H1 (cell line): ENCODE measurements at regions of chr1 and their contacts with region 1.

Region 1: DNA sequence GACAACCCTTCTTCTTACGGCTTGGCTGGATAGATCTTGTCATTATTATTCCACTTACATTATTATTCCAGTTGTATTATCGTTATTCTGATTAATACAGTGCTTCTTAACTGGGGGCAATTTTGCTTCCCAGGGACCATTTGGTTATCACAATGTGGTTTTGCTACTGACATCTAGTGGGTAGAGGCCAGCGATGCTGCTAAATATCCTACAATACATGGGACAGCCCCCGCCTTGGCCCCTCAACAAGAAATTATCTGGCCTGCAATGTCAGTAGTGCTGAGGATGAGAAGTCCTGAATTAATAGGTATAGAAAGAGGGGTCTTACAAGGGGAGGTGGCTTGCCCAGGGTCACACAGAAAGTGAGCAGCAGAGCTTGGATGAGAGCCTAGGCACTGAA is 105.6 kb downstream of the PTPRU start:
- DNase-seq: no peak
- H3K4me3 ChIP-seq: no peak overlapping the region
- H3K27ac ChIP-seq: no peak overlapping the region
- H3K4me1 ChIP-seq: peaks cover 0 to 8% (median 4%) of the 10 kb centered on the region in 4 experiments; a peak in 4 of 7 replicates
- H3K27me3 ChIP-seq: no peaks in the 10 kb centered on the region; a peak in 1 of 7 replicates
- CTCF ChIP-seq: peak in 2 of 3 experiments; percentile 17 to 19; a peak in 2 of 4 replicates
- EP300 ChIP-seq: no peak
- POLR2A ChIP-seq: no peak
- RAD21 ChIP-seq: peak in 1 of 2 experiments; percentile 33; a peak in 1 of 4 replicates

Region 2: GRCh38 chr1:29271724-29272123 is 70.2 kb before region 1 on chr1:
- CTCF ChIA-PET with region 1: no interaction called
- POLR2A ChIA-PET with region 1: no interaction called
- DNase-seq: peak; percentile 73
- H3K4me3 ChIP-seq: peak overlapping the region in 2 of 4 experiments; percentile 3 to 11; a peak in 2 of 8 replicates
- H3K27ac ChIP-seq: 0 out of 2 replicates have a peak overlapping the region, but pooled peaks have one; percentile 4
- H3K4me1 ChIP-seq: peaks cover 6 to 15% (median 11%) of the 10 kb centered on the region in 4 experiments
- H3K27me3 ChIP-seq: no peaks in the 10 kb centered on the region
- CTCF ChIP-seq: no peak
- EP300 ChIP-seq: 0 out of 3 replicates have a peak, but pooled peaks of 1 of the 2 experiments have one; percentile 12
- POLR2A ChIP-seq: no peak
- RAD21 ChIP-seq: peak in 1 of 2 experiments; percentile 22; a peak in 2 of 4 replicates

Region 3: GRCh38 chr1:29356663-29357062 is 14.7 kb after region 1 on chr1:
- CTCF ChIA-PET with region 1: interaction called, 63 read pairs
- POLR2A ChIA-PET with region 1: no interaction called
- DNase-seq: peak in 1 of 2 experiments; percentile 72
- H3K4me3 ChIP-seq: no peak overlapping the region
- H3K27ac ChIP-seq: no peak overlapping the region
- H3K4me1 ChIP-seq: peaks cover 0 to 3% (median 1%) of the 10 kb centered on the region in 4 experiments; a peak in 2 of 7 replicates
- H3K27me3 ChIP-seq: no peaks in the 10 kb centered on the region
- CTCF ChIP-seq: no peak
- EP300 ChIP-seq: no peak
- POLR2A ChIP-seq: no peak
- RAD21 ChIP-seq: no peak

Region 4: GRCh38 chr1:29396438-29397255 is 54.7 kb after region 1 on chr1:
- CTCF ChIA-PET with region 1: interaction called, 13 read pairs
- POLR2A ChIA-PET with region 1: no interaction called
- DNase-seq: no peak
- H3K4me3 ChIP-seq: no peak overlapping the region
- H3K27ac ChIP-seq: no peak overlapping the region
- H3K4me1 ChIP-seq: 0 out of 7 replicates have a peak, but pooled peaks cover 0 to 2% (median 0%) of the 10 kb centered on the region in 4 experiments
- H3K27me3 ChIP-seq: no peaks in the 10 kb centered on the region
- CTCF ChIP-seq: peak; percentile 41 to 61 (median 58)
- EP300 ChIP-seq: no peak
- POLR2A ChIP-seq: no peak
- RAD21 ChIP-seq: peak; percentile 38 to 53; a peak in 3 of 4 replicates